ENCODE measurements at regions of chr11 and their contacts with region 1.

Region 1: DNA sequence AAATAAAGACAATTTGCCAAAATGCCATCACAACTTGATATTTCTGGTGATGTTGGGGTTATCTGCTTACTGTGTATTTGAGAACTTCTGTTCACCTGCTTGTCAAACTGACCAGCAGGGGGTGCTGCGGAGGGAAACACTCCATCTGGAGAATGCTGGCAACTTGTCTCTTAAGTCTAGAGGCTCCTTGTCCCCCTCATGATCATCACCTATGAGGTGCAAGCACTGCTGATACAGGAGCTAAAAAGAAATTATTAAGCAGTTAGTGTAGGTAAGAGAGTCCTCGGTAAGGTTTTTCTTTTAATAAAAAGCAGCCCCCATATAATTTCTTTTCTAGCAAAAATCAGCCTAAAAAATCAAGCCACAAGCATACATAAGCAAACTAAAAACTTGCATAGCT is 32.7 kb upstream of the GLYATL1B start:
- DNase-seq: peak; percentile 25 to 89
- H3K4me3 ChIP-seq: no peak overlapping the region
- H3K27ac ChIP-seq: no peak overlapping the region
- H3K4me1 ChIP-seq: peaks cover 0 to 4% (median 2%) of the 10 kb centered on the region in 4 experiments; a peak in 4 of 7 replicates
- H3K27me3 ChIP-seq: no peaks in the 10 kb centered on the region
- CTCF ChIP-seq: peak; percentile 50 to 68 (median 60)
- EP300 ChIP-seq: no peak
- POLR2A ChIP-seq: no peak
- RAD21 ChIP-seq: peak; percentile 25 to 46; a peak in 3 of 4 replicates

Region 2: GRCh38 chr11:58900479-58901420 is 152.6 kb before region 1 on chr11:
- CTCF ChIA-PET with region 1: interaction called, 20 read pairs
- POLR2A ChIA-PET with region 1: no interaction called
- DNase-seq: peak; percentile 95 to 98
- H3K4me3 ChIP-seq: peak overlapping the region; percentile 38 to 59 (median 46); a peak in 6 of 8 replicates
- H3K27ac ChIP-seq: no peak overlapping the region
- H3K4me1 ChIP-seq: peaks cover 0 to 6% (median 2%) of the 10 kb centered on the region in 4 experiments; a peak in 3 of 7 replicates
- H3K27me3 ChIP-seq: no peaks in the 10 kb centered on the region; a peak in 3 of 7 replicates
- CTCF ChIP-seq: peak; percentile 74 to 86 (median 77)
- EP300 ChIP-seq: no peak; a peak in 1 of 3 replicates
- POLR2A ChIP-seq: no peak
- RAD21 ChIP-seq: peak; percentile 82

Region 3: GRCh38 chr11:58923300-58923788 is 130.0 kb before region 1 on chr11:
- CTCF ChIA-PET with region 1: interaction called, 19 read pairs
- POLR2A ChIA-PET with region 1: interaction called, 3 read pairs
- DNase-seq: peak in 1 of 2 experiments; percentile 57
- H3K4me3 ChIP-seq: peak overlapping the region in 3 of 4 experiments; percentile 19 to 52 (median 29); a peak in 5 of 8 replicates
- H3K27ac ChIP-seq: no peak overlapping the region
- H3K4me1 ChIP-seq: peaks cover 1 to 22% (median 10%) of the 10 kb centered on the region in 4 experiments; a peak in 5 of 7 replicates
- H3K27me3 ChIP-seq: no peaks in the 10 kb centered on the region
- CTCF ChIP-seq: peak in 2 of 3 experiments; percentile 47 to 48; a peak in 3 of 4 replicates
- EP300 ChIP-seq: no peak
- POLR2A ChIP-seq: no peak
- RAD21 ChIP-seq: peak; percentile 33 to 55; a peak in 3 of 4 replicates

Region 4: DNA sequence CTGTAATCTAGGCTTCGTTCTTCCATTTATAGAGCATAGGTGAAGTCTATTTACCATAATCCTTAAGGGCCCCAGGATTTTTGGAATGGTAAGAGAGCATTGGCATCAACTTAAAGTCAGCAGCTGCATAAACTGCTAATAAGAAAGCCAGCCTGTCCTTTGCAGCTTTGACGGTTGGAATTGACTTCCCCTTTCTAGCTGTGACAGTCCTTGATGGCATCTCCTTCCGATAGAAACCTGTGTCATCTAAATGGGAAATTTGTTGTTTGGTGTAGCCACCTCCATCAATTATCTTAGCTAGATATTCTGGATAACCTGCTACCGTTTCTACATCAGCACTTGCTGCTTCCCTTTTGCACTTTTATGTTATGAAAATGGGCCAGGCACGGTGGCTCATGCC is 25.3 kb before region 1 on chr11:
- CTCF ChIA-PET with region 1: interaction called, 12 read pairs
- POLR2A ChIA-PET with region 1: no interaction called
- DNase-seq: no peak
- H3K4me3 ChIP-seq: no peak overlapping the region
- H3K27ac ChIP-seq: no peak overlapping the region
- H3K4me1 ChIP-seq: no peaks in the 10 kb centered on the region
- H3K27me3 ChIP-seq: no peaks in the 10 kb centered on the region
- CTCF ChIP-seq: no peak
- EP300 ChIP-seq: no peak
- POLR2A ChIP-seq: no peak
- RAD21 ChIP-seq: no peak

Region 5: GRCh38 chr11:59088162-59088561 is 34.8 kb after region 1 on chr11:
- CTCF ChIA-PET with region 1: no interaction called
- POLR2A ChIA-PET with region 1: no interaction called
- DNase-seq: no peak
- H3K4me3 ChIP-seq: no peak overlapping the region
- H3K27ac ChIP-seq: no peak overlapping the region
- H3K4me1 ChIP-seq: 0 out of 7 replicates have a peak, but pooled peaks cover 0 to 1% (median 0%) of the 10 kb centered on the region in 4 experiments
- H3K27me3 ChIP-seq: no peaks in the 10 kb centered on the region
- CTCF ChIP-seq: no peak
- EP300 ChIP-seq: no peak
- POLR2A ChIP-seq: no peak
- RAD21 ChIP-seq: no peak

Region 6: GRCh38 chr11:59135648-59136461 is 82.5 kb after region 1 on chr11:
- CTCF ChIA-PET with region 1: interaction called, 17 read pairs
- POLR2A ChIA-PET with region 1: no interaction called
- DNase-seq: peak; percentile 59 to 99
- H3K4me3 ChIP-seq: no peak overlapping the region
- H3K27ac ChIP-seq: no peak overlapping the region; the same call in 1 of the 2 replicates
- H3K4me1 ChIP-seq: no peaks in the 10 kb centered on the region
- H3K27me3 ChIP-seq: no peaks in the 10 kb centered on the region
- CTCF ChIP-seq: peak; percentile 96 to 98 (median 97)
- EP300 ChIP-seq: no peak
- POLR2A ChIP-seq: no peak
- RAD21 ChIP-seq: peak; percentile 97 to 98

Measured in H1 (cell line).